ENCODE measurements at regions of chr11 and their contacts with region 1.

Region 1: DNA sequence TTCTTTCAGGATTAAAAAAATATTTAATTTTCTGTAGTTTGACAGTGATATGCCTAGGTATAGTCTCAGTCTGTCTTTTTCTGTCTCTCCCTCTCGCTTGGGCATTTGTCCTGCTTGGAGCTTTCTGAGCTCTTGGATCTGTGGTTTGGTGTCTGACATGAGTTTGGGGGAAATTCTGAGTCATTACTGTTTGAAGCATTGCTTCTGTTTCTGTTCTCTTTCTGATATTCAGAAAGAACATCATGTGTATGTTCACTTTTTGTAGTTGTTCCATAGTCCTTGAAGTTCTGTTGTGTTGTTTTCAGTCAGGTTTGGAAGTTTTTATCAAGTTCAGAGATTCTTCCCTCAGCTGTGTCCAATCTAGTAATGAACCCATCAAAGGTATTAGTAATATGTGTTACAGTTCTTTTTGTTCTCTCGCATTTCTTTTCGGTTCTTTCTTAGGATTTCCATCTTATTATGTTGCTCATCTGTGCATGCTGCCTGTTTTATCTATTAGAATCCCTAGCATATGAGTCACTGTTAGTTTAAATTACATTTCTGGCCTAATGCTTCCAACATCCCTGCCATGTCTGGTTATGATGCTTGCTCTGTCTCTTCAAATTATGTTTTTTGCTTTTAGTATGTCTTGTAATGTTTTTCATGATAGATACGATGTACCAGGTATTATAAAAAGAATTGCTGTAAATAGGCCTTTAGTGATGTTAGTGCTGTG is 48.4 kb downstream of the DDX10 start:
- DNase-seq: no peak
- H3K4me3 ChIP-seq: no peak overlapping the region
- H3K27ac ChIP-seq: no peak overlapping the region
- H3K4me1 ChIP-seq: no peaks in the 10 kb centered on the region
- H3K27me3 ChIP-seq: no peaks in the 10 kb centered on the region

Region 2: GRCh38 chr11:109384873-109385272 is 671.6 kb after region 1 on chr11:
- CTCF ChIA-PET with region 1: no interaction called
- POLR2A ChIA-PET with region 1: interaction called, 10 read pairs
- DNase-seq: no peak
- H3K4me3 ChIP-seq: no peak overlapping the region
- H3K27ac ChIP-seq: no peak overlapping the region
- H3K4me1 ChIP-seq: no peaks in the 10 kb centered on the region
- H3K27me3 ChIP-seq: no peaks in the 10 kb centered on the region

Measured in common myeloid progenitor, CD34-positive (primary cell).